ENCODE measurements at regions of chr11 and their contacts with region 1.

Region 1: DNA sequence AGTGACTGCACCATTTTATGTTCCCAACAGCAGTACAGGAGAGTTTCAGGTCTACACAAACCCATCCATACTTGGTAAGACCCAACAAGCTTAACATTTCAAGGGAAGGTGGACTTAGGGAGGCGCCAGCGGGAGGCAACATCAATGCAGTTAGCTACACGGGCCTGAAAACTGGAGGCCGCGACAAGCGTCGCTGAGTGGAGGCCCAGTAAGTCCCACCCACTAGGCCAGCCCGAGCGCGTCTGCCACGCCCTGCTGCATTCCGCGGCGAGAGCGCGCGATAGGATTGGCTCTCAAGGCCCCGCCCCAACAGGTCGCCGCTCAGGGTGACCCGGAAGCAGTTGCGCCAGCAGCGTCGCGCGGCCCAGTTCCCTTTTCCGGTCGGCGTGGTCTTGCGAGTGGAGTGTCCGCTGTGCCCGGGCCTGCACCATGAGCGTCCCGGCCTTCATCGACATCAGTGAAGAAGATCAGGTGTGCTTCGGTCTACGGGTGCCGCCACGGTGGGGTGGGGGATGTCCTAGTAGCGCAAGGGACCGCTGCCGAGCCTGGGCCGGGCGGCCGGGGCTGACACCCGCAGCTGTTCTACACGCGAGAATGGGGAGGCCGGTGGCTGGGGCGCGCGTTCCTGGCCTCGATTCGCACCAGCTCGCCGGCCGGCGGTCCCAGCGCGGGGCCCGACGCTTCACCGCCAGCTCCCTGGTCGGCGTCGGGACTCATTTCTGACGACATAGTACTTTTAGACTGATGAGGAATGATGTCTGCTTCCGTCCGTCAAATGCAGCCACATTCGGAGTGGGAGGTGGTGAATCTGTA is at the start of gene EIF3M:
- DNase-seq: peak; percentile 94
- H3K4me3 Mint-ChIP-seq: peak within 1 kb of the TSS; percentile 98
- H3K27ac Mint-ChIP-seq: peak within 1 kb of the TSS; percentile 98
- H3K4me1 Mint-ChIP-seq: peaks cover 38% of the 10 kb centered on the region
- H3K27me3 Mint-ChIP-seq: no peaks in the 10 kb centered on the region
- total RNA-seq, gene EIF3M: 315 and 332 TPM in 2 replicates

Region 2: DNA sequence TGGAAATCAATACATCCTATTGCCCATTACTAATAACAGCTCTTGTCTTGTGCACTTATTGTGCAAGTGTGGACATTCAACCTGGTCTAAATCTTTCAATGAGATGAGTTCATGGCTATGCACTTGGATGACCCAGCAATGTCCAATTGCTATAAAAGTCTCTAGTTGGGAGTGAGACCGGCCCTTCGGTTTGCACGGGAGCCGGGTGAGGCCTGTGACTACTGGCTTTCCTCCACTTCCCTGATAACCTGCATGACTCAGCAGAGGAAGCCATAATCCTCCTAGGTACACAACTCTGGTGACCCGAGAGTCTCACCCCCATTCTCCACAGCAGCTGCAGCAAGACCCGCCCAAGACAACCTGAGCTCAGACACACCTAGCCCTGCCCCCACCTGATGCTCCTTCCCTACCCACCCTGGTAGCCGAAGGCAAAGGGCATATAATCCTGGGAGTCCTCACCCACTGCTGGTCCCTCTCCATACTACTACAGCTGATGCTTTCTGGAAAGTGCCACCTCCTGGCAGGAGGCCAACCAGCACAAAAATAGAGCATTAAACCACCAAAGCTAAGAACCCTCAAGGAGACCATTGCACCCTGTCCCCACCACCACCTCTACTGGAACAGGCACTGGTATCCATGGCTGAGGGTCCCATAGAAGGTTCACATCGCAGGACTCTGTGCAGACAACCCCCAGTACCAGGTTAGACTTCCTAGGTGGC is 636.5 kb before region 1 on chr11:
- intact Hi-C with region 1: loop called (anchors 5 kb)
- DNase-seq: no peak
- H3K4me3 Mint-ChIP-seq: no peak overlapping the region
- H3K27ac Mint-ChIP-seq: no peak overlapping the region
- H3K4me1 Mint-ChIP-seq: peaks cover 54% of the 10 kb centered on the region
- H3K27me3 Mint-ChIP-seq: peaks cover 6% of the 10 kb centered on the region

Region 3: DNA sequence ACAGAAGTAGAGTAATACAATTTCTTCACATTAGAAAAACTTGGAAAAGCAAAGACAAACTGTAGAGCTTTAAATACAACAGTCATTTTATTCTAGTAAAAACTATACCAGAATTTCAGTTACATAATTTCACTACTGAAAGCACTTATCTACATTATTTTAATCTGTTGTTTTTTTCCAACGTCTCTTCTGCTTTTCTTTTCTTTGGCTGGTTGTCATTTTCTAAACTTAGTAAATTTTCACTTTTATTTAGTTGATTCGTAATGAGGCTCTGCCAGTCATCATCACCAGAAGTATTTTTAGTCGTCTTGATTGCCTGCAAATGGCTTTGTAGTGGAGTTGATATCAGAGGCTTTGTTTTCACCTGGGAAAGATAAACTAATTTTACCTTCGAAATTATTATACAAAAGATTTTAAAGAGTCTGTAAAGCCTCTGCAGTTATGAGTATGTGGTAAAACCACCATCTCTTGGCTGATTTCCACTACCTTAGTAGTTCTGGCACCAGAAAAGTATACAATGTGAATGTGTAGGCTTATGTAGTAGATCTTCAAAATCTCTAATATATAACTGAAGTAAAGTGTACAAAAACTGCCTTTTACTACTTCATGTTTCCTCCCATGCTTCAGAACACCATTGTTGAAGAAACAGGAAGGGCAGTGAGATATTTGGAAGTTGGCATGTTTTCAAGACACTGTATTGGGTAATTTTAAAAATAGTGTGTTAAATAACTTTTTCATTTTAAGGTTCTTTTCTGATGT is 19.2 kb after region 1 on chr11:
- intact Hi-C with region 1: loop called (anchors 2 kb)
- DNase-seq: no peak
- H3K4me3 Mint-ChIP-seq: no peak overlapping the region
- H3K27ac Mint-ChIP-seq: no peak overlapping the region
- H3K4me1 Mint-ChIP-seq: peaks cover 2% of the 10 kb centered on the region
- H3K27me3 Mint-ChIP-seq: no peaks in the 10 kb centered on the region

Region 4: DNA sequence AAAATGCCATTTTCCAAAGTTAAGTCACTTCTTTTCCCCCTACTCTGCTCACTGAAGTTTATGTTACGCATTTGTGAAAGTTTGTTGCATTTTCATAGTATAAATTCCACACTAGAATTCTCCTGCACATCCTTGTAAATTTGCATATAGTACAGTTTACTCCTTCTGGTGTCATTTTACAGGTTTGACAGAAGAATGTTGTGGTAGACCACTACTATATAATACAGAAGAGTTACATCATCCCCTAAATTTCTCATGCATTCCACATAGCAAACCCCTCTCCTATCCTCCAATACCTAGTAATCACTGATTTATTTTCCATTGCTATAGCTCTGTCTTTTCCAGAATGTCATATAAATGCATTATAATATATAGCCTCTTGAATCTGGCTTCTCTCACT is 146.3 kb after region 1 on chr11:
- intact Hi-C with region 1: no loop called
- DNase-seq: no peak
- H3K4me3 Mint-ChIP-seq: no peak overlapping the region
- H3K27ac Mint-ChIP-seq: no peak overlapping the region
- H3K4me1 Mint-ChIP-seq: no peaks in the 10 kb centered on the region
- H3K27me3 Mint-ChIP-seq: peaks cover 4% of the 10 kb centered on the region

Region 5: GRCh38 chr11:33065445-33066178 is 481.9 kb after region 1 on chr11:
- intact Hi-C with region 1: loop called (anchors 10 kb)
- DNase-seq: peak; percentile 47
- H3K4me3 Mint-ChIP-seq: no peak overlapping the region
- H3K27ac Mint-ChIP-seq: no peak overlapping the region
- H3K4me1 Mint-ChIP-seq: peaks cover 49% of the 10 kb centered on the region
- H3K27me3 Mint-ChIP-seq: no peaks in the 10 kb centered on the region

Region 6: DNA sequence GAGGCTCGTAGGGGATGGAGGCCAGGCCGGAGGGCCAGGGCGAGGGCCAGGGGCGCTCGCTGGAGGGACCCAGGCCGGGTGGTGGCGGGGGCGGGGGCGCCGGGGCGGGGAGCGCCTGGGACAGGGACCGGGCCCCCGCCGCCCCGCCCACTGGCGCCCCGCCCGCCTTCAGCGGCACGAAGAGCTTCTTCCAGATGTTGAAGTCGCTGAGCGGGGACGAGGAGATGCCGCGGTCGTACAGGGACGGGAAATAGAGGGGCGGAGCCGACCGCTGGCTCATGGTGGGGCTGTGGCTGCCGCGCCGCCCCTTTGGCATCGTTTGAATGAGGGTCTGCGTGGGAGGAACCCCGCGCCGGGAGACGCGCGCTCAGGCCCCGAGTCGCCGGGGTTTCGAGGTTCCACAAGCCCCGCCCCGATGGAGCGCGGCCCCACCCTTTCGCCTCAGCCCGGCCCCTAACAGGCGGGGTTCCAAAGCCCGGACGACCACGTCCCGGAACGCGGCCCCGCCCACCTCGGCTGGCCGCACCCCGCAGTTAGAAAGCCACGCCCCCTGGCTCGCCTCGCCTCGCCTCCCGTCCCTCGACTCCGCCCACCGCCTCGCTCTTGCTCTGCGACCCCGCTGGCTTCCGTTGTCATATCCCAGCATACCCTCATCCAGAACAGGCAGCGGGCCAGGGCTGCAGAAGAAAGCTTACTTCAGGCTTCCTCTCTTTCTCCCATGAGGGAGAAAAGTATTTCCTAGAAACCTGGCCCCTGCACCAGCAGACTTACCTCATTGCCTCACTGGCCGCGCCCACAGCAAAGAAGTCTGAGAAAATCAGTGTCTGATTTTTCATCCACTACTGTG is 1117.0 kb after region 1 on chr11 and contains the start of gene C11orf91:
- intact Hi-C with region 1: loop called (anchors 10 kb)
- DNase-seq: peak; percentile 94
- H3K4me3 Mint-ChIP-seq: peak within 1 kb of the TSS; percentile 84
- H3K27ac Mint-ChIP-seq: peak within 1 kb of the TSS; percentile 78
- H3K4me1 Mint-ChIP-seq: peaks cover 29% of the 10 kb centered on the region
- H3K27me3 Mint-ChIP-seq: peaks cover 22% of the 10 kb centered on the region
- total RNA-seq, gene C11orf91: 0.23 TPM in 1 of 2 replicates, not detected in the other